GM12878 (cell line): ENCODE measurements at regions of chr1 and their contacts with region 1.

Region 1: DNA sequence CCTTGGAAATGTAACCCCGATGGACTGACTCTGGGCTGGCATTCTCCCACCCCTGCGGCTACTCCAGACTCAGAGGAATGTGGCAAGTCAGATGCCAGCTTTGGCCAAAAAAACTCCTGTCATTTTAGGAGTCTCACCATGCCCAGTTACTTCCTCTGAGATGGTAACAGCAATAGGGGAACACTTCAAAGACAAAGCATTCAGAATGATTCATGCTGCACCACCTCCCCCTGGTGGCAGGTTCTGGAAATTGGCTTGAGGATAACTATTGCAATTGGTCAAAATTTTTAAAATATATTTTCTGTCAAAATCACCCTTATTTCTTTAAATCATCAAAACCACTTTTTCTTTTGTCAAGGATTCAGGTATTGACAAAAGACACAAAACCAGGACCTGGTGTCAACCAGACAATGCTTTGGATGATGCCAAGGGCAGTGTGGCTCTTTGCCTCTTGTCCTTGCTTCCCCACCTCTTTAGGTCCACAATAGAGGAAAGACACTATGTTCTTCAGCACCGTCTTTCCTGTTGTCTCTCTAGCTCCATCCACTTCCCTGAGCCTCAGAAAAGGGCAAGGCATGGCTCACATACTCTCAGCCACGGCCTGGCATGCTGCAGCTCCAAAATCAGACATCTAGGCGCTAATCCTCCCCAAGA is 9.9 kb upstream of the CDCA8 start:
- DNase-seq: no peak
- ATAC-seq: peak; percentile 94
- H3K4me3 ChIP-seq: no peak overlapping the region
- H3K27ac ChIP-seq: no peak overlapping the region; the same call in 1 of the 2 replicates
- H3K4me1 ChIP-seq: peaks cover 3% of the 10 kb centered on the region
- H3K27me3 ChIP-seq: no peaks in the 10 kb centered on the region
- CTCF ChIP-seq: peak; percentile 79 to 93 (median 85)
- EP300 ChIP-seq: no peak
- POLR2A ChIP-seq: no peak
- RAD21 ChIP-seq: peak; percentile 94

Region 2: DNA sequence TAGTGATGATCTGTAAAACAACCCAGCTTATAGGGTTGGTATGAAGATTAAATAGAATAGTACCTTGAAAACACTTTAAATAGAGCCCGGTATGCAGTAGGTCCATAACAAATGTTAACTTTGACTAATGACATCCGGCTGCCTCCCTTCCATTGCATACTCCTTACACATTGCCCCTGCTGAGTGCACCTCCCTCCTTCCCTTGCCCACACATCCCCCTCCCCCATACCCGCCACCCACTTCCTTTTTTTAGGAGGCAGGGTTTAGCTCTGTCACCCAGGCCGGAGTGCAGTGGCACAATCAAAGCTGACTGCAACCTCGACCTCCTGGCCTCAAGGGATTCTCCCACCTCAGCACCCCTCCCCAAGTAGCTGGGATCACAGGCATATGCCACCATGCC is 232.5 kb before region 1 on chr1:
- CTCF ChIA-PET with region 1: interaction called, 33 read pairs
- POLR2A ChIA-PET with region 1: no interaction called
- RAD21 ChIA-PET with region 1: interaction called, 7 read pairs
- SMC1A ChIA-PET with region 1: interaction called, 4 read pairs
- in situ Hi-C with region 1: loop called (anchors 5 kb)
- intact Hi-C with region 1: loop called (anchors 2 kb)
- DNase-seq: no peak
- ATAC-seq: peak; percentile 51
- H3K4me3 ChIP-seq: no peak overlapping the region
- H3K27ac ChIP-seq: no peak overlapping the region
- H3K4me1 ChIP-seq: no peaks in the 10 kb centered on the region
- H3K27me3 ChIP-seq: no peaks in the 10 kb centered on the region
- CTCF ChIP-seq: no peak
- EP300 ChIP-seq: no peak
- POLR2A ChIP-seq: no peak
- RAD21 ChIP-seq: no peak

Region 3: GRCh38 chr1:37486680-37487618 is 195.5 kb before region 1 on chr1:
- CTCF ChIA-PET with region 1: interaction called, 21 read pairs
- POLR2A ChIA-PET with region 1: interaction called, 3 read pairs
- RAD21 ChIA-PET with region 1: interaction called, 10 read pairs
- SMC1A ChIA-PET with region 1: interaction called, 14 read pairs
- in situ Hi-C with region 1: no loop called
- intact Hi-C with region 1: no loop called
- DNase-seq: no peak
- ATAC-seq: peak; percentile 88
- H3K4me3 ChIP-seq: no peak overlapping the region
- H3K27ac ChIP-seq: 0 out of 2 replicates have a peak overlapping the region, but pooled peaks have one; percentile 15
- H3K4me1 ChIP-seq: peaks cover 9% of the 10 kb centered on the region
- H3K27me3 ChIP-seq: no peaks in the 10 kb centered on the region
- CTCF ChIP-seq: peak; percentile 94 to 99 (median 99)
- EP300 ChIP-seq: no peak
- POLR2A ChIP-seq: peak; percentile 21
- RAD21 ChIP-seq: peak; percentile 77

Region 4: DNA sequence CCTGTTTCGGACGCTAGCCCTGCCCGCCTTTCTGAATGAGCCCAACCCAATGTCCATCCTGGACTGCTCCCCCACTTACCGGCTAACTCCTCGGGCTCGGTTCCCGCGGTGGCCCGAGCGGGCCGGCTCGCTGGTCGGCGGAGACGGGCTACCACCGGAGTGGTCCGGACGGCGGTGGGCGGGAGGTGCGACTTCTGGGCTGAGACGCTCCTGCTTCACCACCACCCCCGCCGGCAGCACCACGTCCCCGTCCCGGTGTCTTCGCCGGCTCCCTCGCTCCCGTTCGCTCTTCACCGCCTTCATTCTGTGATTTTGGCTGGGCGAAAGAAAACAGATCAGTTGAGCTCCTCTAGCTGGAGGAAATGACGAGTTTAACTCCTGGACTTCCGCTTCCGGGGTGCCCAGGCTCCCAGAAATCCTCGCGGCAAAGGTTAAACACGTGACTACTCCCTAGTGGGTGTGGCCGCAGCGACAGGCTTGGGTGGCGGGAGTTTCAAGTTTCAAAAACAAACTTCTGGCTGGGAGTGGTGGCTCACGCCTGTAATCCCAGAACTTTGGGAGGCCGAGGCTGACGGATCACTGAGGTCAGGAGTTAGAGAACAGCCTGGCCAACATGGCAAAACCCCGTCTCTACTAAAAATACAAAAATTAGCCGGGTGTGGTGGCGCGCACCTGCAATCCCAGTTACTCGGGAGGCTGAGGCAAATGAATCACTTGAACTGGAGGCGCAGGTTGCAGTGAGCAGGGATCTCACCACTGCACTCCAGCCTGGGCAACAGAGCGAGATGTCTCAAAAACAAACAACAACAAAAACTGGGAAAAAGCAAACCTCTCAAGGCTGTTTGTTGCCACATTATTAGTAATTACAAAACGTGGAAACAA is 128.3 kb before region 1 on chr1 and contains the start of gene SNIP1:
- CTCF ChIA-PET with region 1: interaction called, 11 read pairs
- POLR2A ChIA-PET with region 1: no interaction called
- RAD21 ChIA-PET with region 1: no interaction called
- SMC1A ChIA-PET with region 1: interaction called, 8 read pairs
- in situ Hi-C with region 1: loop called (anchors 5 kb)
- intact Hi-C with region 1: no loop called
- DNase-seq: peak; percentile 70
- ATAC-seq: peak; percentile 97
- H3K4me3 ChIP-seq: peak within 1 kb of the TSS; percentile 97
- H3K27ac ChIP-seq: peak within 1 kb of the TSS; percentile 58
- H3K4me1 ChIP-seq: peaks cover 6% of the 10 kb centered on the region; the same call in 1 of the 2 replicates
- H3K27me3 ChIP-seq: no peaks in the 10 kb centered on the region
- CTCF ChIP-seq: no peak
- EP300 ChIP-seq: 0 out of 4 replicates have a peak, but pooled peaks of 1 of the 2 experiments have one; percentile 7
- POLR2A ChIP-seq: peak; percentile 89
- RAD21 ChIP-seq: no peak
- polyA plus RNA-seq, gene SNIP1: 2.7 to 3.3 TPM

Region 5: DNA sequence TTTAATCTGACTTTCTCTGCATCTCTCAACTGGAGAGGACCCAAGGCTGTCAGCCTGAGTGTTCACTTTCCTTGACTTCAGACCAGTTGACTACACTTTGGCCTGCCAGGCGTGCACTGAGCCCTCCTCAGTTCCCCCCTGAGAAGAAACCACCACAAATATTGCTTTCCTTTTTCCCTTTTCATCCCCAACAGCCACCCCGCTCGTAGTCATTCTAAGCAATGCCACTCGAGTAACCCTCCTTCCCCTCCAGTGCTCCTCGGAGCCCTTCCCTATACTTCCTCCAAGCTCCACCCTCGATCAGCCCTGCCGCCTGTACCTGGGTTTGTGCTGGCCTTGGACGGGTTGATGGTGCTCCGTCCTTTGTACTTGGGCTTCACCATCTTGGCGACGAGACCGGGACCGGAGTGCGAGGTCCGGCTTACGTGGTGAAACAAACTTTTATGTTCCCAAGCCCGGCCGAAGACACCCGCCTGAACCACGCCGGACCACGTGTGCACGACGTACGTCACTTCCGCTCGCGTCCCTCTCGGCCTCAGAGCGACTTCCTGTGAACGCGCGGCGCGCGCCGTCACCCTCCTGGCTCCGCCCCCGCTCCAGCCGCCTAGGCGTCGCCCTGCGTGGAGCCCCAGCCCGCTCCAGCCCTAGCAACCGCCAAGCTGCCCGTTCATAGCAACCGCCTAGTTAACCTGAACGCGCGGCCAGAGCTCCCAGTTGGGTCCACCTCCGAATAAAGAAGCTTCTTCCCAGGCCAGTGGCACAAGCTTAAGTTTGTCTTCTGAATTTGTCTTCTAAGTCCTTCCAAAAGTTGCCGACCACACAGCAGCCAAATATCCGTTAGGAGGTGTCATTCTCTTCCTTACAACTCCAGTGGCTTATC is 86.8 kb before region 1 on chr1 and contains the start of gene GNL2:
- CTCF ChIA-PET with region 1: interaction called, 521 read pairs
- POLR2A ChIA-PET with region 1: no interaction called
- RAD21 ChIA-PET with region 1: interaction called, 105 read pairs
- SMC1A ChIA-PET with region 1: interaction called, 245 read pairs
- in situ Hi-C with region 1: no loop called
- intact Hi-C with region 1: no loop called
- DNase-seq: peak; percentile 83
- ATAC-seq: peak; percentile 99
- H3K4me3 ChIP-seq: peak within 1 kb of the TSS; percentile 77
- H3K27ac ChIP-seq: peak within 1 kb of the TSS; percentile 84
- H3K4me1 ChIP-seq: peaks cover 7% of the 10 kb centered on the region
- H3K27me3 ChIP-seq: no peaks in the 10 kb centered on the region
- CTCF ChIP-seq: no peak
- EP300 ChIP-seq: no peak
- POLR2A ChIP-seq: peak; percentile 96
- RAD21 ChIP-seq: no peak
- polyA plus RNA-seq, gene GNL2: 64.2 to 91.3 TPM

Region 6: DNA sequence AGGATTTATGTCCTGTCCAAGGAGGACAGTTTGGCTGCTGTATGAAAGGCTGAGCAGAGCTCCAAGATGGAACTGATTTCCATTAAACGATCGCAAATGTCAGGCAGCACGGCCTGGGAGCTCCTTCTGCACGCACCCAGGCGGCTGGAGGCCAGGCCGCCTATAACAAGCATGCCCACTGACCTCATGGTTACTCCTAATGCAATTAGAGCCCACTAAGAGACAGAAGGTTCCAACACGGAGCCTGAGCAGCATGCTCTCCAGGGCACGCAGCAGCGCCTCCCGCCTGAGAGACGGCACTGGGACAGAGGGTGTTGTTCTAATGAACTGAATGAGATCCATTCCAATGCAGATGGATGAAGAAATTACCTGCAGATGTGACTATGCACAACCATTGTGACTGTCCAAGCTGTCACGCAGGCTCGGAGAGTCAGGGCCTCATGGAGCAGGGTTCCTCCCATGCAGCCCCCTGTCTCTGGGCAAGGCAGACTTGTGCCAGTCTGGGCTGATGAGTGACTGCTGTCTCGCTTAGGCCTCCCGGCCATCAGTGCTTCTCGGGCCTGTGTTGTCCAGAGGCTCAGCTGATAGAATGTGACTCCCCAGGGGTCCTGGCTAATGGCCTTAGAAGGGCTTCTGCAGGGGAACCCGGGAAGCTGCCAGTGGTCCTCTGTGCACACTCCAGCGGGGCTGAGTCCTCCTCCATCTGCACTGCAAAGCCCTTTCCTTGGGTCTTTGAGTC is 15.3 kb before region 1 on chr1:
- CTCF ChIA-PET with region 1: interaction called, 33 read pairs
- POLR2A ChIA-PET with region 1: no interaction called
- RAD21 ChIA-PET with region 1: no interaction called
- SMC1A ChIA-PET with region 1: interaction called, 5 read pairs
- in situ Hi-C with region 1: no loop called
- intact Hi-C with region 1: no loop called
- DNase-seq: no peak
- ATAC-seq: no peak
- H3K4me3 ChIP-seq: no peak overlapping the region
- H3K27ac ChIP-seq: no peak overlapping the region
- H3K4me1 ChIP-seq: no peaks in the 10 kb centered on the region
- H3K27me3 ChIP-seq: no peaks in the 10 kb centered on the region; a peak in 1 of 4 replicates
- CTCF ChIP-seq: no peak
- EP300 ChIP-seq: no peak
- POLR2A ChIP-seq: no peak
- RAD21 ChIP-seq: no peak

Region 7: DNA sequence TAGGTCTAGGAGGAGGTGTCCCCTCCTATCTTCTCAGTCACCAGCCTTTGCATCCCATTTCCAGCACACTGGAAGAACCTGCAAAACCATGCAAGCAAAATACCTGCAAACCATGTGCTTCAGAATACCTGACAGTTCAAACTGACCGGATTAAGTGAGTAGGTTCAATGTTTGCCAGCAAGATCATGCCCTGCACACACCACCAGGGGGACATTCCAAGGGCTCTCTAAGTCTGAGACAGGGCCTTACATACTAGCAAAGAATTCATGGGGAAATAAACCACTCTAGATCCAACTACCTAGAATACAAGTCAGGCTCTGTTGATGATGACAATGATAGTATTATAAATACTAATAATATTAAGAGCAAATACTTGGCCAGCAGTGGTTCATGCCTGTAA is 236.8 kb after region 1 on chr1:
- CTCF ChIA-PET with region 1: no interaction called
- POLR2A ChIA-PET with region 1: no interaction called
- RAD21 ChIA-PET with region 1: no interaction called
- SMC1A ChIA-PET with region 1: no interaction called
- in situ Hi-C with region 1: no loop called
- intact Hi-C with region 1: no loop called
- DNase-seq: no peak
- ATAC-seq: peak; percentile 67
- H3K4me3 ChIP-seq: no peak overlapping the region
- H3K27ac ChIP-seq: no peak overlapping the region
- H3K4me1 ChIP-seq: peaks cover 30% of the 10 kb centered on the region
- H3K27me3 ChIP-seq: no peaks in the 10 kb centered on the region
- CTCF ChIP-seq: peak; percentile 17 to 62 (median 61)
- EP300 ChIP-seq: no peak
- POLR2A ChIP-seq: no peak
- RAD21 ChIP-seq: peak; percentile 50